Esophagus muscularis mucosa (tissue), 4 donors: ENCODE measurements at regions of chr1 and their contacts with region 1.

Region 1: DNA sequence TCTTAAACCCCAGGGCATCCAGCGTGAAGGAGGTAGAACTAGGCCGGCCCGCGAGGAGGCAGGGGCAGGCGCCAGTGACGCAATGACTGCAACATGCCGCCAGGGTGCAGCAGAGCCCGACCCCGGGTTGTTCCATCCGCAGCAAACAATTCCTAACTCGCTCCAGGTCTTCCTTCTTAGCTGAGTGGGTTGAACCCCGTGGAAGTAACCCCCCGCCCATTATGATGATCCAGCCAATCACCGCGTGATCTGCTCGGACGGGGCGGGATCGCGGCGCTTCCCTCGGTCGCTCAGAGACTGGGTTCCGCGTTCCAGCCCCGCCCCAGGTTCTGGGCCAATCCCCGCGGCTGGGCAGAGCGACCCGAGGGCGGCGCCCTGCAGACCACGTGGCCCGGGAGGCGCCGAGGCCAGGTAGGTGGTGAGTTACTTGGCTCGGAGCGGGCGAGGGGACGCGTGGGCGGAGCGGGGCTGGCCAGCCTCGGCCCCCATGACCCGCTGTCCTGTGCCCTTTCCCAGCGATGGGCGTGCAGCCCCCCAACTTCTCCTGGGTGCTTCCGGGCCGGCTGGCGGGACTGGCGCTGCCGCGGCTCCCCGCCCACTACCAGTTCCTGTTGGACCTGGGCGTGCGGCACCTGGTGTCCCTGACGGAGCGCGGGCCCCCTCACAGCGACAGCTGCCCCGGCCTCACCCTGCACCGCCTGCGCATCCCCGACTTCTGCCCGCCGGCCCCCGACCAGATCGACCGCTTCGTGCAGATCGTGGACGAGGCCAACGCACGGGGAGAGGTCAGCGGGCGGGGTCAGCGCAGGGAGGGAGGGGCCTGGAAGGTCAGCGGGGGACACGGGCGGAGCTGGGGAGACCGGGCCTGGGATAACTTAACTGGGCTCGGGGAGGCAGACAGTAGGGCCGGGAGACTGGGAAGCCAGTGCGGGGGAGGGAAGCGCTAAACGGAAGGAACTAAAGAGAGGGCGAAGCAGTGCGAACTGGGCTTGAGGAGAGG is at the start of gene DUSP23:
- DNase-seq: peak; percentile 100
- H3K4me3 ChIP-seq: peak within 1 kb of the TSS; percentile 70 to 95 (median 76)
- H3K27ac ChIP-seq: peak within 1 kb of the TSS; percentile 76 to 84 (median 81)
- H3K4me1 ChIP-seq: peaks cover 15 to 29% (median 17%) of the 10 kb centered on the region in 4 donors
- H3K27me3 ChIP-seq: no peaks in the 10 kb centered on the region
- CTCF ChIP-seq: peak; percentile 95 to 99 (median 97)
- EP300 ChIP-seq: no peak
- POLR2A ChIP-seq: peak; percentile 47
- total RNA-seq, gene DUSP23: 43.2 to 75.2 (median 50.1) TPM

Region 2: DNA sequence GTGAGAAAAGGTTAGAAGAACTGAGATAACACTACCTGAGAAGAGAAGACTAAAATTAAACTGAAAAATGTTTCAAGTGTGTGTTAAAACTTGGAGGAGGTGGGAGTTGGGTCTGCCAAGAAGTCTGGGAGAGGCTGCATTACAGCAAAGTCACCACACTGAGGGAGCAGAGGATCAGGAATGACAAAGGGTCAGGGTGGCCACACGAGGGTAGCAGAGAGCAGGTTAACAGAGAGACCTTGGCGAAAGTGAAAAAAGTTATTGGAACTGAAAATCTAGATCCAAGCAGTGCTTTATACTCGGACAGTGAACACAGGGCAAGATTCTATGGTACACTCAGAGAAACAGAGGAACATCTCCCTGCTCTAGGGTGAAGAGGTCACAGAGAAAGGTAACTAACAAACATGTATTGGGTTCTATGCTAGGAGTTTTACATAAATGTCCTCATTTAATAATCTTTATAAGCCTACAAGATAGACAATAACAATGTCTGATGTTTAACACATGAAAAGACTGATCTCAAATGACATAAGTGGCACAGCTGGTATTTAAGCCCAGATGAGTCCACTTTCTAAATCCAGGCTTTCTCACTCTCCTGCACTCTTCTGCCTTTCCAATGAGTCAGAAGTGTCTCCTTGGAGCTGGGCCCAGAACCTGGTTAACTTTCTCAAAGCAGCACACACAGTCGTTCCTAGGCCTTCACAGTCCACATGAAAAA is 619.7 kb before region 1 on chr1:
- intact Hi-C with region 1: loop called (anchors 10 kb)
- DNase-seq: no peak
- H3K4me3 ChIP-seq: no peak overlapping the region
- H3K27ac ChIP-seq: peak overlapping the region; percentile 49 to 66 (median 62)
- H3K4me1 ChIP-seq: peaks cover 6 to 10% (median 8%) of the 10 kb centered on the region in 4 donors
- H3K27me3 ChIP-seq: peaks cover 0 to 14% (median 0%) of the 10 kb centered on the region in 4 donors
- CTCF ChIP-seq: peak; percentile 92 to 99 (median 96)
- EP300 ChIP-seq: no peak
- POLR2A ChIP-seq: no peak

Region 3: GRCh38 chr1:159653201-159653600 is 127.7 kb before region 1 on chr1:
- intact Hi-C with region 1: no loop called
- DNase-seq: no peak
- H3K4me3 ChIP-seq: no peak overlapping the region
- H3K27ac ChIP-seq: no peak overlapping the region
- H3K4me1 ChIP-seq: no peaks in the 10 kb centered on the region
- H3K27me3 ChIP-seq: no peaks in the 10 kb centered on the region
- CTCF ChIP-seq: no peak
- EP300 ChIP-seq: no peak
- POLR2A ChIP-seq: no peak

Region 4: DNA sequence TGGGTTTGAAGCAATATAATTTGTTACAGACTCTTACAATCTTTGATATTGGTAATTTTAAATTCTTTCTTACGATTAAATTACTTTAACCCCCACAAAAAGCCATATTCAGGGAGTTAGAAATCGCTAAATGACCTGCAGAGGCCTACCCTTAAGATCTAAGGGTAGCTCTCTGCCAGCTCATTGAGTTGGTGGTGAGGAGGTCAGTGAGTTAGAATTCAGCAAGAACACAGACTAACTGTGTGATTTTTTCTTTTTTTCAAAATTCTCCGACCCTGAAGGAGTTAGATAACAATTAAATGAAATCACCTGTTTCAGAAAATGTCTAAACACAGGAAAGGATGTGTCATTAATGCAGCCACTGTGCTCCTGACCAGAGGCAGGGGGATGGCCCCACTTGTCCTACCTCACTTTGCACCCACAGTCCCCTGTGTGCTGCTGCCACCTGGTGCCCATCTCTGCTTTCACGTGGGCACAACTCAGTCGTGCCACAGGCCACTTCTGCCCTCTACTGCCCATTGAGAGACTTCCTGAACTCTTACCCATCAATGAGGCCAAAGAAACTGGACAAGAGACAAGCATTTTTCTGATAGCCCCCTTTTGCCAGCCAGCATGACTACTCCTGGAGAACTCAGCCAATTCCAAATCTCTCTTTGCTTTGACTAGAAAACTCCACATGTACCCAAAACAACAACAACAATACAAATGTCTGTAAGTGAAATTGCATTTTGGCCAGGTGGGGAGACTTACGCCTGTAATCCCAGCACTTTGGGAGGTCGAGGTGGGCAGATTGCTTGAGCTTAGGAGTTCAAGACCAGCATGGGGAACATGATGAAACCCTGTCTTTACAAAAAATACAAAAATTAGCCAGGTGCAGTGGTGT is 110.6 kb after region 1 on chr1:
- intact Hi-C with region 1: loop called (anchors 5 kb)
- DNase-seq: peak; percentile 94
- H3K4me3 ChIP-seq: no peak overlapping the region
- H3K27ac ChIP-seq: no peak overlapping the region
- H3K4me1 ChIP-seq: peaks cover 15 to 26% (median 18%) of the 10 kb centered on the region in 4 donors
- H3K27me3 ChIP-seq: no peaks in the 10 kb centered on the region
- CTCF ChIP-seq: peak; percentile 93 to 98 (median 95)
- EP300 ChIP-seq: no peak
- POLR2A ChIP-seq: no peak

Region 5: DNA sequence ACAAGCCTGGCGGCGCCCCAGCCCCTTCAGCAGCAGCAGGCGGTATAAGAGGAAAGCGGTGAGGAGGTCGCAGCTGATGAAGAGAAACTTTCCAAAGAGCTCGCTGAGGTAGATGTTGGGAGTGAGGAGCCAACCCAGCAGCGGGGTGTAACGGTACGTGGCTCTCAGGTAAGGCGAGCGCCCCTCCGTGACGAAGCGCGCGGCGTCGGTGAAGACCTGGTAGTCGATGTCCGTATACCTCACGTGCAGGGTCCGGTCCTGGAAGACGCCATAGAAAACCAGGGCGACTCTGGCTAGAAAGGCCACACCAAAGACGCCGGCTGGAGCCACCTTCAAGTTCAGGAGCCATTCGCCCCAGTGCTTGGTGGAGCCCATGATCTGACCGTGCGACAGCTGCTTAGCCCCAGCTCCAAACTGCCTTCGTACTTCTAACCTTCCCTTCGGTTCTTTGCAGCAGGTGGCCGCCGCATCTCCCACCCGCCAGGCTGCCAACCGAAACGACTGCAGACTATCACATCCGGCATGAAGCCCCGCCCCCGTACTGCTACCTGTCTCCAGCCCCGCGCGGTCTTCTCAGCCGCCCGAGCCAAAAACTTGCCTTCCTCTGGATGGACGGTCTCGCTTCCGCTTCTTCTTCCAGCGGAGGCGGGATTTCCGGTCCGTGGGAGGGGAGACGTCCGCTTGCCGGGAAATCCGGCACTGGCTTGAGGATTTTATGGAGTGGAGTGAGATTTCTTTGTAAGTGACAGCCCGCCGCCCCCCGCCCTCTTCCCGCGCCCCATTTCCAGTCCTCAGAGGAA is 250.7 kb after region 1 on chr1 and contains the start of gene PIGM:
- intact Hi-C with region 1: loop called (anchors 5 kb)
- DNase-seq: peak; percentile 97
- H3K4me3 ChIP-seq: peak within 1 kb of the TSS; percentile 63 to 86 (median 76)
- H3K27ac ChIP-seq: peak within 1 kb of the TSS; percentile 70 to 83 (median 74)
- H3K4me1 ChIP-seq: peaks cover 14 to 36% (median 28%) of the 10 kb centered on the region in 4 donors
- H3K27me3 ChIP-seq: no peaks in the 10 kb centered on the region
- CTCF ChIP-seq: peak in 1 of 3 experiments; percentile 27
- EP300 ChIP-seq: no peak
- POLR2A ChIP-seq: no peak
- total RNA-seq, gene PIGM: 2.8 to 4.9 (median 4.6) TPM